ENCODE measurements at regions of chr2 and their contacts with region 1.

Region 1: DNA sequence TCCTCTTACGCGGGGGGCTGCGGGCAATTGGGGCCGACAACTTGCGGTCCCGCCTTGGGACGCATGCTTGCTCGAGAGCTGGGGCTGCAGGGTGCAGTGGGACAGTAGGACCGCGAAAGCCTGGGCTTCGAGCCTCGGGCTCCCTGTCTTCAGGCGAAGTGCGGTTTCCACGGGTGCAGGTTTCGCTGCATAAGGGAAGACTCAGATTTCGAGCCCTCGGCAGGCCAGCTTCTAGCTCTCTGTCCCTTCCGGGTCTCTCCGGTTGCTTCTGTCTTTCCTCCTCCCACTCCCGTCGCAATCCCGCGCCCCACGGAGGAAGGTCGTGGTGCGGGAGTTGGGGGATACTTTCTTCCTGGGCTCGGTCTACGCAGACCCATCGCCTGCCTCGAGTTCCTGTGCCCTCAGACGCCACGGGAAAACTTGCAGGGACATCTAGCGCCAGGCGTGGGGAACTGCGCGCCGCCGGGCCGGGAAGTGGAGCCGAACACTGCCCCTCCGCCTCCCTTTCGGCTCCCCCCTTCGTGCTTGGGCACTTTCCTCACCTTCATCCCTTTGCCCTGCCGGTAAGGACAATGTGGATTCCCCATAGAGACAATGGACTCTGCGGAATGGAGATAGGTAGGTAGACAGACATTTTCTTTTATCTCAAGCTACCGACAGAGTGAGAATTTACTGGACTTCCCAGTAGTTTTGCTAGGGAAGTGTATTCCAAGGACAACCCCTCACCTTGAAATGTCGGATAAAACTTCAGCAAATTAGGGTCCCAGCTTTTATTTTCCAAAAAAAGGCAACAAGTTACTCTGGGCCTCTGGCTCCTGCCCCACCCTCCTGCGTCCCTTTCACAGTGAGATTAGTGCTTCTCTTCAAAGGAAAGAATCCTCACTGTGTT is 4.2 kb upstream of the HOXD13 start:
- DNase-seq: no peak
- H3K4me3 ChIP-seq: peak overlapping the region; percentile 33
- H3K27me3 ChIP-seq: peaks cover 49% of the 10 kb centered on the region
- CTCF ChIP-seq: peak; percentile 93

Region 2: GRCh38 chr2:175251425-175252041 is 836.8 kb before region 1 on chr2:
- CTCF ChIA-PET with region 1: interaction called, 10 read pairs
- POLR2A ChIA-PET with region 1: no interaction called
- DNase-seq: no peak
- H3K4me3 ChIP-seq: no peak overlapping the region
- H3K27me3 ChIP-seq: peaks cover 7% of the 10 kb centered on the region
- CTCF ChIP-seq: peak; percentile 68

Region 3: DNA sequence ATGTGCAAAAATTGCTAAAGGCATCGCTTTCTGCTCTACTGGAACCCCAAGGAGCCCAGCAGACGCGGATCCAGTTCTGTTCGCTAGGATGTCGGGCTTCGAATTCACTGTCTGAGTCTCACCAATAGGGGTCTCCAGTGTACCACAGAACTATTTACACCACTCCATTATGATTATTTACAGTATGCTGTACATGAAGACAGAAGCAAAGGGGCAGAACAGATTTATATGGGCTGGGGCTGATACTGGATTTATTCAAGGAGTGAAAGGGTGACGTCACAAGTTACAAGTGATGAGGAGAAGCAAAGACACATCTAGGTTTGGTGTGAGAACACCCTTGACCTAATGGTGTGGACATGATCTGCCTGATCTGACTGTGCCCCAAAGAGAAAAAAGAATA is 721.5 kb before region 1 on chr2:
- CTCF ChIA-PET with region 1: interaction called, 15 read pairs
- POLR2A ChIA-PET with region 1: no interaction called
- DNase-seq: no peak
- H3K4me3 ChIP-seq: no peak overlapping the region
- H3K27me3 ChIP-seq: no peaks in the 10 kb centered on the region; the same call in 1 of the 2 replicates
- CTCF ChIP-seq: peak; percentile 82

Region 4: DNA sequence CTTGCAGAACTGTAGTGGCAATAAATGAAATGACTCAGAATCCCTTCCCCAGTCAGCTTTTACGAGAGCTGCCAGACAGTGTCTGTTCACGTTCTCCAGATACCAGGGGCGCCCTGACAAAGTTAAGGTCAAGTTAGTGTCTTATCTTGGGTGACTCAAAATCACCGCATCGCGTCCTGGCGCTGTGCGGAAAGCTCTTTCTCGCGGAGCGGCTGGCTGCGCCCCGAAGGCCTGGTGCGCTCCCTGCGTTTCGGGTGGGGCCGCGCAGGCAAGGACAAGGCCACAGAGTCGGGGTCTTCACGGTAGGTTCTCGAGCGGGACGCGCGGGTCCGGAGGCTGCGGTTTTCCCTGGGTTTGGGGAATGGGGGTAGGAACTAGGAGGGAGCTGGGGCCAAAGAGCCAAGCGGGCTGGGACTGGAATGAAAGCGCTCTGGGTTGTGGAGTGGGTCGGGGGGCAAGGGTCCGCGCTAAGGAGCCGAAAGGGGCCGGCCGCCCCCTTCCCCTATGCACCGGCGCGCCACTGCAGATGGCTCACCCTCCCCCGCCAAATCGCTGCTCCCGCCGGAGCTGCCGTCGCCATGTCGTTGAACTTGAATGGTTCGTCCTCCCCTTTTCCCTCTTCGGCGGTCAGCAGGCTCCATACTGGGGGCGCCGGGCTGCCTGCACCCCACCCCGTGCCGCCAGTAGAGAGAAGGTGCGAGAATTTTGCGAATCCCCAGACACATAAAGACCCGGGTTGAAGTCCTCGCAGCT is 16.2 kb after region 1 on chr2:
- CTCF ChIA-PET with region 1: interaction called, 13 read pairs
- POLR2A ChIA-PET with region 1: no interaction called
- DNase-seq: peak; percentile 84
- H3K4me3 ChIP-seq: peak overlapping the region; percentile 54
- H3K27me3 ChIP-seq: peaks cover 5% of the 10 kb centered on the region
- CTCF ChIP-seq: 0 out of 2 replicates have a peak, but pooled peaks have one; percentile 8

Measured in BJ (cell line).